Caki2 (cell line): ENCODE measurements at regions of chr5 and their contacts with region 1.

Region 1: GRCh38 chr5:107669096-107670031 is 1.4 kb downstream of the EFNA5 start:
- DNase-seq: peak; percentile 39

Region 2: GRCh38 chr5:107571621-107572536 is 97.5 kb before region 1 on chr5:
- in situ Hi-C with region 1: loop called (anchors 10 kb)
- DNase-seq: peak; percentile 97

Region 3: DNA sequence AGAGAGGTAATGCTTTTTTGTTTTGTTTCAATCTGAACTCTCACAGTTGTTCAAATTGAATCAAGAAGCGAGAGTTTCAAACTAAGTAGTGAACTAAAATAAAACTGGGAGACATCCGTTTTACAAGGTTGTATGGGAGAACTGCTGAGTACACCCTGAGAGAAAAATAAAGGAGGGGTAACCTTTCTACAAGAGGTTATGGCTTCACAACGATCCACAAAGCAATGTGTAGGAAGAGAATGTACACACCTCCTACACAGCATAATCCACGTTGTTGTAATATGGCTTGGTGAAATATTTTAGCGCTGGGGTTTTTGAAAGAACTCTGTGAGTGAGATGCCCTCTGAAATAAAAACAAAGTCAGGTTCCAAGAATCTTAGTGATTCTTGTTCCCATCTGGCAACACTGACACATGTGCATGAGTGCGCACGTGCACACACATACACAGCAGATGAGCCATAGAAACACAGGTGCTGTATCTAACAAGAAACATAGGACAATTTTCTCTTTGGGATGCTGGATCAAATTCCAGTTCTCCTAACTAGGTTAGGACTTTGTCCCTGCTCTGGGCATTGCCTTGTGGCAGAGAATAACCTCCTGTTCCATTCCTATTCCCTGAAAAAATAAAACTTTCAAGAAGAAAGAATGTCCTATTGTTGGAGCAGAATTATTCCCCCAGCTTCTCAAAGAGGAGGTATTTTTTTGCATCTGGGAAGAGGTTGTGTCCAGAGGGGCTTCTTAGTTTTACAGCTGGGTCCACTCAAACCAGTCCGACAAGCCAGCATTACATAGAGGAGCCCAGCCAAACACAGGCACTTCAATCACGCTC is 95.8 kb after region 1 on chr5:
- in situ Hi-C with region 1: no loop called
- DNase-seq: no peak